ENCODE measurements at regions of chr1 and their contacts with region 1.

Region 1: DNA sequence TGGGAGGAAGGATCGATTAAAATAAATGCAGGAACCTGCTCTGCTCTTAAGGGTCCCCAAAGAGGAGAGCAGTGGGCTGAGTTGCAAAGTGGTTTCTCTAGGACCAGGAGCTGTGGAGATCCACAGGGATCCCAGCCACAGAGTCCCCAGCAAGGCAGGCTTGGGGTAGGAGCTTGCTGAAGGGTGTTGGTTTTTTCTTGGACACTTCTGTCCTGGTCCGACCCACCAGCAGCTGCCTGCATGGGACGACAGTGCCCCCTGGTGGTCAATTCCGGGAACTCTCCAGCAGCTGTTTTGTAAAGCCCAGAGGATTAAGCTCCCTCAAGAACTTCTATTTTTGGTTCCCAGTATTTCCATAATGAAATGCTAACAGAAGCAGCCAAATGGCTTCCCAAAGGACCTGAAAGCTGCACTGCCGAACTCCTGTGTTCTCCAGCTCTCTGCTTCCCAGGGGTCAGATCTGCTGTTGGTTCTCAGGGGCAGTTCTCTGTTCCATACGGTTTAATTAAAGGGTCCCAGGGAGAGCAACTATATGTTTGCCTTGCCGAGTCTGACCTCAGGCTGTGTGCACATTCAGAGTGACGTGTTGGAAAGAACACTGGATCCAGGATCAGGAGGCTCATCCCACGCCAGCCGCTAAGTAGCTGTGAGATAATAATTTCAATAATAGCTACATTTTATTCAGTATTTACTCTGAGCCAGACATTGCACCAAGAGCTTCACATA is 23.2 kb downstream of the NENF start:
- DNase-seq: peak; percentile 55 to 96
- H3K4me3 ChIP-seq: peak overlapping the region in 1 of 2 donors; percentile 31
- H3K27ac ChIP-seq: peak overlapping the region; percentile 43 to 78
- H3K4me1 ChIP-seq: peaks cover 13 to 24% of the 10 kb centered on the region in 2 donors
- H3K27me3 ChIP-seq: no peaks in the 10 kb centered on the region
- CTCF ChIP-seq: peak; percentile 94 to 98 (median 94)

Region 2: DNA sequence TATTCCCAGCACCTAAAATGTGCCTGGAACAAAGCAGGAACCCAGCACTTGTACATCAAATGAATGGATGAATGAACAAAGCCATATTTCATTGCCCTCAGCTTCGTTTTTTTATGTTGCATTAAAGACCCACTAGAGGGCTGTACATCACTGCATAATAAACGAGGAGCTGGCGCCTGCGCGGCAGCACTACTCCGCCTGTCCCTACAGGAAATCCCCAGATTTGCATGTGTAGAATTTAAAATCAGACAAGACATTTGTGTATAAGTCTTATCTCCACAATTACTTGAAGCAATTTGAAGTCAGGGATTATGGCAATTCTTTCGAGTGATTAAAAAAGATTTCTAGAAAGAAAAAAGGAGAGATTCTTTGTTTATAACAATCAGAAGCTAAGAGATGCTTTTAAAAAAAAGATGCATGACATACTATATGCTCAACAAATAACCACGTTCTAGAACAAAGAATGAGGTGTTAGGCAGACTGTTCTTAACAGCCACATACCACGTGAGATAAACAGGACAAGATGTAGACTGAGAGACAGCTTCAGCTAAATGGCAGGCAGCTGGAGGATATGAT is 775.1 kb before region 1 on chr1:
- intact Hi-C with region 1: loop called (anchors 2 kb)
- DNase-seq: peak in 1 of 2 donors; percentile 75
- H3K4me3 ChIP-seq: no peak overlapping the region
- H3K27ac ChIP-seq: no peak overlapping the region
- H3K4me1 ChIP-seq: no peaks in the 10 kb centered on the region
- H3K27me3 ChIP-seq: no peaks in the 10 kb centered on the region
- CTCF ChIP-seq: peak; percentile 53 to 71 (median 69)

Region 3: DNA sequence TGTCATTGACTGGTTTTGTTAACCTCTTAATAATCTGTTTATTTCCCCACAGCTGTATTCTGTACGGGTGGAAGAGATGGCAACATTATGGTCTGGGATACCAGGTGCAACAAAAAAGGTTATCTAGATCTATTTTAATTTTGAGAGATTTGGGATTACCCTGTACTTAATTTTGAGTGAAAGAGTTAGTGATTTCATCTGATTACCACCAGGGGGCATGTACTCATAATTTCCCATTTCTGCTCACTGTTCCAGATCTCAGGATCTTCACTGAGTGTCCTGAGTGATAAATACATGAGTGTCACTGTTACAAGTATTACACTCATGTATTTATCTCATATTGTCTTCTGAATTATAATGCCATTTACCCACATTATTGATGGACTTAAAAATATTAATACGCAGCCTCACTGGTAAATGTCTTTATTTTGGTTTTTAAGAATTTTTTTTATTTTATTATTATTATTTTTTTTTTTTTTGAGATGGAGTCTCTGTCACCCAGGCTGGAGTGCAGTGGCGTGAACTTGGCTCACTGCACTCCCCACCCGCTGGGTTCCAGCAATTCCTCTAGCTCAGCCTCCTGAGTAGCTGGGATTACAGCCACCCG is 393.0 kb before region 1 on chr1:
- intact Hi-C with region 1: loop called (anchors 2 kb)
- DNase-seq: no peak
- H3K4me3 ChIP-seq: no peak overlapping the region
- H3K27ac ChIP-seq: no peak overlapping the region
- H3K4me1 ChIP-seq: no peaks in the 10 kb centered on the region
- H3K27me3 ChIP-seq: no peaks in the 10 kb centered on the region
- CTCF ChIP-seq: peak; percentile 45 to 64 (median 59)

Region 4: DNA sequence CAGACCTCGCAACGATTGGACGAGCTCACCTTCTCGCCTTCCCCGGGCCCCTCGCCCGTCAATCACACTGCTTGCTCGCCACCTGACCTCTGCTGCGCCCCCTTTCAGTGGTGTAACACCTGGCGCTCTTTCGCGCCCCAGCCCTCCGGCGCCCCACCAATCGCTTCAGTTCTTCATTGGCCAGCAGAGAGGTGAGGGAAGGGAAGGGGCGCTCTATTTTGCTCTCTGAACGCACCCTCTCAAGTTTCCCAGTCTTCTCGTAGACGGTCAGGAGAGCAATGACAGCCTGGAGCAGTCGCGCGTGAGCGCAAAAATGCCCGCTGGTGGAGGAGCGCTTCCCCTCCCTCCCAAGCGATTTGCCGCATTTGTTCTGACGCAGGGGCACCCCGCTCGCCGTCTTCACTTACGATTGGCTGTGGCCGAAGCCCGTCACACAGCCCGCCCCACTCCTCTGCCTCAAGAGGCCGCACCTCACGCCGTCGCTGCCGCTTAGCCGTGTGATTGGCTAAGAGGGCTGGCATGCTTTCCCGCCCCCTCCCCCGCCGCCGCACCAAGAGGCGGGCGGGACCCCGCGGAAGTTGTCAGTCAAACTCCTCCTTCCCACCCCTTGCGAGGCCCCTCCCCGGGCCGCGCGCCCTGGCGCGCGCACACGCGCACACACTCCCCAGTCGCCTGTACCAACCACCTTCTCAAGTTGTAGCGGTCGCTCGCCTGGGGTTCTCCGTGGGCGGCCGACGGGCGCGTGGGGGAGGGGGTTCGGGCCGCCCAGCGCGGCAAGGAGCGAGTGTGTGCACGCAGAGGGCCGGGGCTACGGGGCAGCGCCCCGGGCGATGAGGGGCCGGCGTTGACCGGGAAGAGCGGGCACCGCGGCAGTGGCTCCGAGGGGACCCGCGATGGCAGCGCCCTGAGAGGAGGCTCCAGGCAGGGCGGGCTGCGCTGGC is 171.0 kb before region 1 on chr1 and contains the start of gene PPP2R5A:
- intact Hi-C with region 1: loop called (anchors 1 kb)
- DNase-seq: peak; percentile 98 to 100
- H3K4me3 ChIP-seq: peak within 1 kb of the TSS; percentile 74 to 88
- H3K27ac ChIP-seq: peak within 1 kb of the TSS; percentile 97 to 99
- H3K4me1 ChIP-seq: peaks cover 3 to 20% of the 10 kb centered on the region in 2 donors
- H3K27me3 ChIP-seq: no peaks in the 10 kb centered on the region
- CTCF ChIP-seq: peak; percentile 8 to 23 (median 11)
- total RNA-seq, gene PPP2R5A: 64.7 TPM

Region 5: DNA sequence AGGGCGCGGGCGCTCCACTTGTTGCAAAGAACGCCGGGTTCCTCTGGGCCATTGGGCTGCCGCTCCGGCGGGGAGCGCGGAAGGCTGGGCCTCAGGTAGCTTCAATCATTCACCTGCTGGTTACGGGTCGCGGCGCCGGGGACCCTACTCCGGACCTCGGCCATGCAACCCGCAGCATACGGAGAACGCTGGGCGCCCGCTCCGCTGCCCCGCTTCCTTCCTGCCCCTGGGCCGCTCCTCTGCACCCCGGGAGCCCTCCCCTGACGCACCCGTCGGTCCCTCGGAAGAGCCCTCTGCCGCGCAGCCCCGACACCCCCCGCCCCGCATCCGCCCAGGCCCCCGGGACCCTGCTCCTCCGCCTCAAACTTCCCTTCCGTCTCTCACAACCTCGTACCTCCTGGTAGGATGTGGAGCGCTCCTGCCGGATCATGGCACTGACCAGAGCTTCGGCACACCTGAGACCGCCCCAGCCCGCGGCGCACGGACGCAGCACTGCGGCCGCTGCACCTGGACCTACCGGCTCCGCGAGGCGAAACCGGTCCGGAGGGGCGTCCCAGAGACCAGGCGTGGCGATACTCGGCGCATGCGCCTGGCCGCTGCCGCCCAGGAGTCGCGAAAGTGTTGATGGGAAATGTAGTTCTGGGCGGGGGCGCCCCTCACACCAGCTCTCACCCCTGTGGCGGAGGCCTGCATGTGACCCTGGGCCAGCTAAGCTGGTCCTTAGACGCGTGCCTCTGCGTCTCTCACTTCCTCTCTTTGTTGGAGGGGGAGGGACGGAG is 41.4 kb before region 1 on chr1 and contains the start of gene PACC1:
- intact Hi-C with region 1: loop called (anchors 2 kb)
- DNase-seq: peak; percentile 79 to 95
- H3K4me3 ChIP-seq: peak within 1 kb of the TSS; percentile 70 to 95
- H3K27ac ChIP-seq: peak within 1 kb of the TSS; percentile 10 to 28
- H3K4me1 ChIP-seq: peaks cover 0 to 7% of the 10 kb centered on the region in 2 donors
- H3K27me3 ChIP-seq: no peaks in the 10 kb centered on the region
- CTCF ChIP-seq: peak in 1 of 3 experiments; percentile 4
- total RNA-seq, gene PACC1: 0.85 TPM

Region 6: GRCh38 chr1:212621951-212622305 is 166.0 kb after region 1 on chr1:
- intact Hi-C with region 1: no loop called
- DNase-seq: no peak
- H3K4me3 ChIP-seq: no peak overlapping the region
- H3K27ac ChIP-seq: no peak overlapping the region
- H3K4me1 ChIP-seq: no peaks in the 10 kb centered on the region
- H3K27me3 ChIP-seq: no peaks in the 10 kb centered on the region
- CTCF ChIP-seq: no peak

Region 7: GRCh38 chr1:212633161-212633560 is 177.2 kb after region 1 on chr1:
- intact Hi-C with region 1: no loop called
- DNase-seq: no peak
- H3K4me3 ChIP-seq: no peak overlapping the region
- H3K27ac ChIP-seq: no peak overlapping the region
- H3K4me1 ChIP-seq: peaks cover 5 to 11% of the 10 kb centered on the region in 2 donors
- H3K27me3 ChIP-seq: no peaks in the 10 kb centered on the region
- CTCF ChIP-seq: no peak

Region 8: DNA sequence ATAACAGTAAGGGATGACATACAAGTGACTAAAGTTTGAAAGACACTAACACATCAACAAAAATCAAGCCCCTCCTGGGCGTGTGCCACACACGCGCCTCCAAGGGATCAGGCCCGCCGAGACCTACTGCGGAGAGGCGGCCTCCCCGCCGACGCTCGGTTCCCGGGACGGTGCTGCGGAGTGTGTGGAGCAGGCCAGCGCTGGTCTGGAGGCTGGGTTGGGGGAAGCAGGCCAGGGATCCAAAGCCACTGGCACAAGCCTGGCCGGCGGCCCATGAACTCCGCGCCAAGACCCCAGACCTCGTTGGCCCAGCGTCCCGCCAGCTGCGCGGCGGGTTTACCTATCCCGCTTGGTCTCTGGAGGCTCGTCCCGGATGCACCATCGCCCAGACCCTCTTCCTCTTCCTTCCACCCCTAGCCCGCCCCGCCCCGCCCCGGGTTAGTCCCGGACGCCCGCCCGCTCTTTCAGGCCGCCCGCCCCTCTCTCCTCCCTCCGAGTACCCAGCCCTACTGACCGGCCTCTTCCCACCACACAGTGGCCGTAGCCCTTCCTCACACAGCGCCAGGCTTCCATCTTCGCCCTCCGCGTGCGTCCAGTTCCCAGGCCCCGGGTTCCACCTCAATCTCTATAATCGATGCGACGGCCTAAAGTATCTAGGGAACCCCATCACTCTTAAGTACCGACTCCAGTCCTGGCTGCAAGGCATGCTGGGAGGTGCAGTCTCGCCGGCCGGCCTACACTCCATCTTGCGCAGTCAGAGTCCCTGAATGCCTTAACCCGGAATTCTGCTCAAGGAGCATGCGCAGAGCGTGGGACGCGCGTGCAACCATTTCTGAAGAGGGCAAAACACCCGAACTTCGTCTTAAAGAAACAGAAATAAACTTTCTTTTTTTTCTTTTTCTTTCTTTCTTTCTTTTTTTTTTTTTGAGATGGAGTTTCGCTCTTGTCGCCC is 559.4 kb after region 1 on chr1 and contains the start of gene ANGEL2:
- intact Hi-C with region 1: loop called (anchors 10 kb)
- DNase-seq: peak; percentile 90 to 98
- H3K4me3 ChIP-seq: peak within 1 kb of the TSS; percentile 74 to 81
- H3K27ac ChIP-seq: peak within 1 kb of the TSS; percentile 88 to 91
- H3K4me1 ChIP-seq: peaks cover 5 to 12% of the 10 kb centered on the region in 2 donors
- H3K27me3 ChIP-seq: no peaks in the 10 kb centered on the region
- CTCF ChIP-seq: no peak
- total RNA-seq, gene ANGEL2: 36.7 TPM